Activated CD4-positive, alpha-beta memory T cell treated with anti-CD3 and anti-CD28 coated beads for 36 hours (primary cell): ENCODE measurements at regions of chr1 and their contacts with region 1.

Region 1: GRCh38 chr1:235423191-235423652 is 56.0 kb downstream of the TBCE start:
- DNase-seq: peak; percentile 44
- H3K4me3 Mint-ChIP-seq: no peak overlapping the region
- H3K27ac Mint-ChIP-seq: no peak overlapping the region
- H3K4me1 Mint-ChIP-seq: peaks cover 16% of the 10 kb centered on the region
- H3K27me3 Mint-ChIP-seq: no peaks in the 10 kb centered on the region

Region 2: DNA sequence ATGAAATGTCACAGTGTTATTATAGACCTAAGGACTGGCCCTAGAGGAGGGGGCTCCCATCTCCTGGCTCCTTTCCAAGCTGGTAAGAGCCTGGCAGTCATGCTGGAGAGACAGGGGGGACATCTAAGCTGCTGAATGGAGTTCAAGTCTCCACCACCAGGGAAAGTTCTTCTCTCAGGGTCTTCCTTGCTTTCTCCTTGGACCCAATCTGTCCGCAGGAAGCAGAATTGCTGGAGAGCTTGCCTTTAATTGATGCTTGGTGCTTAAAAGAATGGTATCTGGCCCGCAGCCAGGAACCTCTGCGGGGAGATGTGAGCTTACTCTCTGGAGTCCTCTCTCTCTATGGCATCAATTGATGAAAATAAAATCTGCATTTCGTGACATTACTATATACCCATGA is 838.3 kb before region 1 on chr1:
- CTCF ChIA-PET with region 1: no interaction called
- POLR2A ChIA-PET with region 1: no interaction called
- intact Hi-C with region 1: loop called (anchors 5 kb)
- DNase-seq: no peak
- H3K4me3 Mint-ChIP-seq: no peak overlapping the region
- H3K27ac Mint-ChIP-seq: no peak overlapping the region
- H3K4me1 Mint-ChIP-seq: no peaks in the 10 kb centered on the region
- H3K27me3 Mint-ChIP-seq: peaks cover 2% of the 10 kb centered on the region

Region 3: DNA sequence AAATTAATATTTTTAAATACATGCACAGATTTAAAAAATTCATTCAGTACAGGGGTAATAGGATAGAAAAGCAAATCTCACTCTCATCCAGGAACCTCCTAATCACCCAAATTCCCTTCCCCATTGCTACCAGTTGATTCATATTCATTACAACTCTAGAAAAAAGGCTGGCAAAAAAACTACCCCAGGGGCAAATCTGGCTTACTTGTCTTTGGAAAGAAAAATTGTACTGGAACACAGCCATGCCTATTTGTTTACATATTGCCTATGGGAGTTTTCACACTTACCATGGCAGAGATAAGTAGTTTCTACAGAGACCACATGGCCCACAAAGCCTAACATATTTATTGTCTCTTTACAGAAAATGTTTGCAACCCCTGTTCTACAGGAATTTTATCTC is 253.2 kb before region 1 on chr1:
- CTCF ChIA-PET with region 1: no interaction called
- POLR2A ChIA-PET with region 1: no interaction called
- intact Hi-C with region 1: no loop called
- DNase-seq: no peak
- H3K4me3 Mint-ChIP-seq: no peak overlapping the region
- H3K27ac Mint-ChIP-seq: no peak overlapping the region
- H3K4me1 Mint-ChIP-seq: no peaks in the 10 kb centered on the region
- H3K27me3 Mint-ChIP-seq: no peaks in the 10 kb centered on the region